ENCODE measurements at regions of chr13 and their contacts with region 1.

Region 1: DNA sequence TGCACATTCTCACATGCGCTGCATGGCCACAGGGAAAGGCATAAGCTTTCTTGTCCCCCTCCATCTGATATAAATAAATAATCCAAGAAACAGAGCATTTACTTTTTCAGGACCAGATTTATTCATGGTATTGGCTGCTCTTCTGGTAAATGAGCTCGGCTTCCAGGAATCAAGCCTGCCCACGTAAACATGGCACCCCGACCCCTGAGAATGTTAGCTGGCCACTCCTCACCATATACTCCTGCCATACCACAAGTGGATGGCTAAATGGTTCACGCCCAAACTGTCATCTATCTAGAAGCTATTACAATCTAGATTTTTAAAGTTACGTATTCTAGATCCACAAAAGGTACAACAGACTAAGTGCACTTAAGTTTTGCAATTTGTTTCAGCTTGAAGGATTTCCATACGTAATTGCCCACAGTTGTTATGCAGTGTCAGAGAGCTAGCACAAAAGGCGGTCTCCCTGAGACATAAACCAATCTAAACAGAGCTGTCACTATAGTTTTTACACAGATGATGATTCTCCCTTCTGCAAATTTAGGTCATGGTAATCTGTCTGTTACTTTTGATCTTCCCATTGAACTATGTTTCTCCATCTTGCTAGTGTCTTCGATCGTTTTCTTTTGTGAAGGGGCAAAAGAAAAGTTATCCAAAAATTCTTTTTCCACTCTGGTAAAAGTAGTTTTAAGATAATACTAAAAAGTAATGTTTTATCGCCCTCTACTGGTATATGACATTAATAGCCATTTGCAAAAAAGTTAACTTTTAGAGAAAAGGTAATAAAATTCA is 16.2 kb upstream of the FOXO1 start:
- DNase-seq: no peak
- H3K4me3 ChIP-seq: no peak overlapping the region
- CTCF ChIP-seq: peak; percentile 1

Region 2: GRCh38 chr13:39684531-39685137 is 998.0 kb before region 1 on chr13:
- CTCF ChIA-PET with region 1: interaction called, 48 read pairs
- POLR2A ChIA-PET with region 1: no interaction called
- DNase-seq: peak; percentile 7
- H3K4me3 ChIP-seq: no peak overlapping the region
- CTCF ChIP-seq: peak; percentile 4

Region 3: DNA sequence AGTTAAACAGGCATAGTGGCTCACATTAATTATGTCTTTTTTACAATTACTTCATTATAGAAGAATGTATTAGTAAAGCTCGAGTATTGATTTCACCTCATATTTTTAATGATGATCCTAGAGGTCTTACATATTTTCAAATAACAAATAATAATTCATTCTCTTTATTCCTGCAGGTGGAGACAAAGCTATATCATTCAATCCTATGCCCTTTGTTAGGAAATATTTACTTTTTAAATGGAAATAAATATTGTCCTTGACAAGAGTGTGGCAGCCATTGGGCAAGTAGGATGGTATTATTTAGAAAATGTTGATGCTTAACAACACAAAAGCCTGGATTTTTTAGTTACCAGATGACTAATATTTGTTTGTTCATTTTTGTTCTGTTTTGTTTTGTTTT is 899.6 kb before region 1 on chr13:
- CTCF ChIA-PET with region 1: interaction called, 10 read pairs
- POLR2A ChIA-PET with region 1: no interaction called
- DNase-seq: no peak
- H3K4me3 ChIP-seq: no peak overlapping the region
- CTCF ChIP-seq: no peak

Region 4: GRCh38 chr13:40069173-40070044 is 613.2 kb before region 1 on chr13:
- CTCF ChIA-PET with region 1: interaction called, 96 read pairs
- POLR2A ChIA-PET with region 1: no interaction called
- DNase-seq: no peak
- H3K4me3 ChIP-seq: no peak overlapping the region
- CTCF ChIP-seq: peak; percentile 68

Region 5: GRCh38 chr13:40666905-40667621 is 15.6 kb before region 1 on chr13:
- CTCF ChIA-PET with region 1: interaction called, 16 read pairs
- POLR2A ChIA-PET with region 1: no interaction called
- DNase-seq: no peak
- H3K4me3 ChIP-seq: peak overlapping the region; percentile 67
- CTCF ChIP-seq: no peak

Measured in AG04449 (cell line).